BJ (cell line): ENCODE measurements at regions of chr9 and their contacts with region 1.

Region 1: DNA sequence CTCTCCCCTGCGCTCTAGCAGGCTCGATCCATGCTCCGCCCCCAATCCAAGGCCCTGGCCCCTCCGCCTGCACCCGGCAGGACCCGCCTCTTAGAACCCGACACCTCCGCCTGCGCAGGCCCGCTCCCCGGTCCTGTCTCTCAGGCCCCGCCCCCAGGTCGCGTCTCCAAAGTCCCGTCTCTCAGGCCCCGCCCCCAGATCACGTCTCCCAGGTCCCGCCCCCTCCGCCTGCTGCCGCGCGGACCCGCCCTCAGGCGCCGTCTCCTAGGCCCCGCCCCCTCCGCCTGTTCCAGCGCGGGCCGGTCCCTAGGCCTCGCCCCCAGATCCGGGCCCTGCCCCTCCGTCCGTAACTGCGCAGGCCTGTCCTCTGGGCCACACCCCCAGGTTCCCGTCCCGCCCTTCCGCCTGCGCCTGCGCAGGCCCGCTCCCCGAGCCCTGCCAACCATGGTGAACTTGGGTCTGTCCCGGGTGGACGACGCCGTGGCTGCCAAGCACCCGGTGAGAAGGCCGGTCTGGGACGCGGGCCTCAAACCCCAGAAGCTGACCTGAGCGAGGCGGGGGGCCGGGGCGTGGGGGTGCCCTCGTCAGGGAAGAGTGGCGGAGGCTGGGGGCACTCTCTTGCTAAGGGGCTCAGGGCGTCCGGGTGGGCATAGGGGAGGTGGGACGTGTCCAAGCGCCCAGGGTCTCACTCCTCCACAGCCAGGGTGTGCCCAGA is at the start of gene TMEM141:
- DNase-seq: peak; percentile 94
- H3K4me3 ChIP-seq: peak within 1 kb of the TSS; percentile 99
- H3K27me3 ChIP-seq: peaks cover 3% of the 10 kb centered on the region
- CTCF ChIP-seq: no peak
- polyA plus RNA-seq, gene TMEM141: 51.5 and 62.5 TPM in 2 replicates

Region 2: GRCh38 chr9:136779808-136780207 is 11.3 kb before region 1 on chr9:
- CTCF ChIA-PET with region 1: interaction called, 24 read pairs
- POLR2A ChIA-PET with region 1: no interaction called
- DNase-seq: no peak
- H3K4me3 ChIP-seq: no peak overlapping the region
- H3K27me3 ChIP-seq: peaks cover 11% of the 10 kb centered on the region
- CTCF ChIP-seq: 0 out of 2 replicates have a peak, but pooled peaks have one; percentile 8

Region 3: DNA sequence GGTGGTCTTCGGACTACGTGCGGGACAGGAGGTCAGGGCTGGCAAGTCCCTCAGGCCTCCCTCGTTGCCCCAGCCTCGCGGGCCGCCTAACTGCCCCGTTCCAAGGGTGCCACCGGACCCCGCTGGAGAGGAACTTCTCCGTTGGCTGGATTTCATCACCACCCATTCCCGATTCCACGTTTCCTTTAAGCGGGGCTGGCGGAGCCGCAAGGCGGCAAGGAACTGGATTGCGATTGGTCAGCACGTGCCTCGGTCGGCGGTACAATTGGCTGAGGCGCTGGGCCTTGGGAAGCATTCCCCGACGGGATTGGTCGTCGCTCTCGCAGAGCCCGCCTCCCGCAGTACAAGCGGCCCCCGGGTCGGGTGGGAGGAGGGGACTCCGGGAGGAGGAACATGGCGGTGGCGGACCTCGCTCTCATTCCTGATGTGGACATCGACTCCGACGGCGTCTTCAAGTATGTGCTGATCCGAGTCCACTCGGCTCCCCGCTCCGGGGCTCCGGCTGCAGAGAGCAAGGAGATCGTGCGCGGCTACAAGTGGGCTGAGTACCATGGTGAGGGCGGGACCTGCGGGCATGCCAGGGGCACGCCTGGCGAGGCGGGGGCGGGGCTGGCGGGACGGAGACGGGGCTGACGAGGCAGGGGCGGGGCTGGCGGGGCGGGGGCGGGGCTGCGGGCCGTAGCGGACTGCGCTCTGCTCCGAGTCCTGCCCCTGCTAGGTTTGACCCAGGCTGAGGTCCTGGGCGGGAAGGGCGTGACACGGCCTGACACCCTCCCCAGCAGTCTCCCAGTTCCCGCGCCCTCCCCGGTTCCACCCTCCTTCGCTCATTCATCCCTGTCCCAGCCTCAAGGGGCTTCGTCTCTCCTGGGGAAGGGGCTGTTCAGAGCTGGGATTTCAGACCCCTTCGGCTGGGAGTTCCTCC is 58.2 kb after region 1 on chr9 and contains the start of gene PHPT1:
- CTCF ChIA-PET with region 1: interaction called, 10 read pairs
- POLR2A ChIA-PET with region 1: no interaction called
- DNase-seq: peak; percentile 94
- H3K4me3 ChIP-seq: peak within 1 kb of the TSS; percentile 84
- H3K27me3 ChIP-seq: 0 out of 2 replicates have a peak, but pooled peaks cover 6% of the 10 kb centered on the region
- CTCF ChIP-seq: no peak
- polyA plus RNA-seq, gene PHPT1: 116 and 233 TPM in 2 replicates